Vagina (tissue), 2 donors: ENCODE measurements at regions of chr22 and their contacts with region 1.

Region 1: DNA sequence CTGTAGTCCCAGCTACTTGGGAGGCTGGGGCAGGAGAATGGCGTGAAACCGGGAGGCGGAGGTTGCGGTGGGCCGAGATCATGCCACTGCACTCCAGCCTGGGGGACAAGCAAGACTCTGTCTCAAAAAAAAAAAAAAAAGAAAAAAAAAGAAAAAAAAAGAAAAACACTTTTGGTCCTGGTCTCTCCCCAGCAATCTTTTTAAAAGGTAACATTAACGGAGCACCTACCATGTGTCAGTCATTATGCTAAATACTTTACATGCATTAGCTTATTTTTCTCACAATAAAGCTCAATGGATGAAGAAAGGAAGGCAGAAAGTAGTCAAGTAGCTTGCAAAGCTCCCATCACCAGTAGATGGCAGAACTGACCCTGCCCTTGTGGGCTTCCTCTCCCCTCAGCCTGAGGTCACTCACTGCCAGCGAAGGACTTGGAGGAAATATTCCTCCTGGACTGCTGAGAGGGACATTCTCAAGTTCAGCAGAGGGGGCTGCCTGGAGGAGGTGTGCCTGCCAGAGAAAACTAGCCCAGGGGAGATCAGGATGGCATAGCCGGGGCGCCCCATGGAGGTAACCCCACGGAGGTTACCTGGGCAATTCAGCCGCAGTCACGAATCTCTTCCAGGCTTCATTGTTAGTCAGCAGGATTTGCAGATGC is 15.5 kb downstream of the APOL3 start:
- DNase-seq: no peak
- H3K4me3 ChIP-seq: no peak overlapping the region
- H3K27ac ChIP-seq: no peak overlapping the region
- H3K4me1 ChIP-seq: peaks cover 30% of the 10 kb centered on the region
- H3K27me3 ChIP-seq: no peaks in the 10 kb centered on the region
- CTCF ChIP-seq: peak; percentile 57 to 72 (median 69)
- POLR2A ChIP-seq: no peak

Region 2: GRCh38 chr22:35900483-35901168 is 244.4 kb before region 1 on chr22:
- intact Hi-C with region 1: no loop called
- DNase-seq: no peak
- H3K4me3 ChIP-seq: no peak overlapping the region
- H3K27ac ChIP-seq: no peak overlapping the region
- H3K4me1 ChIP-seq: peaks cover 65% of the 10 kb centered on the region
- H3K27me3 ChIP-seq: no peaks in the 10 kb centered on the region
- CTCF ChIP-seq: no peak
- POLR2A ChIP-seq: no peak

Region 3: DNA sequence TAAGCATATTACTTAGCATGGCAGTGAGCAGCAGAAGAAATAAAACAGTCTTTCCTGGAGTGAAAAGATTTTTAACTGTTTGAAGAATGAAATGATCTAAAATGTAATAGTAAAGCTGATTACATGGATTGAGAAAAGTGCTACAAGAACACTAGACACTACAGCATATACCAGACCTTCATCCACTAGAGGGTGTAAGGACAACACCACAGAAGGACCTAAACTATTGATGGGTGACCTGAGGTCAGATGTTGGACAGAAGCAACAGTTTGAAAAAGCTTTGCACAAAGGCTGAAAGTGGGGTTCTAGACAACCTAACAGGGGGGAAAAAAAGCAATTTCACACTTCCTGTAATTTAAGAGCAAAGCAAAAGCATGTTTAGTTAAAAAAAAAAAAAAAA is 214.1 kb before region 1 on chr22:
- intact Hi-C with region 1: no loop called
- DNase-seq: no peak
- H3K4me3 ChIP-seq: no peak overlapping the region
- H3K27ac ChIP-seq: no peak overlapping the region
- H3K4me1 ChIP-seq: peaks cover 9% of the 10 kb centered on the region
- H3K27me3 ChIP-seq: no peaks in the 10 kb centered on the region
- CTCF ChIP-seq: peak; percentile 30 to 74 (median 33)
- POLR2A ChIP-seq: no peak

Region 4: GRCh38 chr22:36097880-36098279 is 47.1 kb before region 1 on chr22:
- intact Hi-C with region 1: no loop called
- DNase-seq: no peak
- H3K4me3 ChIP-seq: no peak overlapping the region
- H3K27ac ChIP-seq: no peak overlapping the region
- H3K4me1 ChIP-seq: no peaks in the 10 kb centered on the region
- H3K27me3 ChIP-seq: no peaks in the 10 kb centered on the region
- CTCF ChIP-seq: no peak
- POLR2A ChIP-seq: no peak

Region 5: DNA sequence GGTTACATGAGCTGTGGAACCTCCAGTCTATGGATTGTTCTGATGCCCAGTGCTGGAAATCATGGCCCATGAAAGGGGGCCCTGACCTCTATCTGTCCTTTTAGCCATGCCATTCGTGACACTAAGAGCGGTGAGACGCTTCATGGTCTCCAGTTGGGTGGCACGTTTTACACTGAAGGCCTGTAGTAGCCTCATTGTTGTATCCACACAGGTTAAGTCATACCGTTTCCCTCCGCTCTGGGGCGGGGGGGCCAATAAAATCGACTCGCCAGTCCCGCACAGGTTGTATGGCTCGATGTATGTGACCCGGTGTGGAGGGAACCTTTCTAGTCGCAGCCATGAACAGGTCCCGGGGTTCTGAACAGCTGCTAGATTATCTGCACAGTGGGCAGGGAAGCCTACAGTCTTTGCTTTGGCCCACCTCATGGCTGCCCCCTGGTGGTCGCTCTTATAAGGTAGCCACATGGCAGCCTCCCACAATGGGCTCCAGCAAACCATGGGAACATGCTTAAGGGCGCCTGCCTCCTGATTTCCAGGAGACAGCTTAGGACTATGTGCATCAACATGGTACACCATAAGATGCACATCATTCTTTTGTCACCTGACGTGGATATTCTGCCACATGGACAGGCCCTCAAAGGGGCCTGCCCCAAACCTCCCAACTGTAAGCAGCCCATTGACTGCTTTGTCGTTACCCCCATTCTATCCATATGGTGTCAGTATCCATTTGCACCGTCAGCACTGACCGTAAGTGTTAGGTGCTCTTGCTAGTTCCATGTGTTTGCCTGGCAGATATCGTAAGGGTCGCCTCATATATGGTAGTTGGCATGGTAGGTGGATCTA is 35.2 kb after region 1 on chr22:
- intact Hi-C with region 1: loop called (anchors 5 kb)
- DNase-seq: no peak
- H3K4me3 ChIP-seq: no peak overlapping the region
- H3K27ac ChIP-seq: no peak overlapping the region
- H3K4me1 ChIP-seq: no peaks in the 10 kb centered on the region
- H3K27me3 ChIP-seq: no peaks in the 10 kb centered on the region
- CTCF ChIP-seq: peak; percentile 66 to 94 (median 75)
- POLR2A ChIP-seq: no peak

Region 6: DNA sequence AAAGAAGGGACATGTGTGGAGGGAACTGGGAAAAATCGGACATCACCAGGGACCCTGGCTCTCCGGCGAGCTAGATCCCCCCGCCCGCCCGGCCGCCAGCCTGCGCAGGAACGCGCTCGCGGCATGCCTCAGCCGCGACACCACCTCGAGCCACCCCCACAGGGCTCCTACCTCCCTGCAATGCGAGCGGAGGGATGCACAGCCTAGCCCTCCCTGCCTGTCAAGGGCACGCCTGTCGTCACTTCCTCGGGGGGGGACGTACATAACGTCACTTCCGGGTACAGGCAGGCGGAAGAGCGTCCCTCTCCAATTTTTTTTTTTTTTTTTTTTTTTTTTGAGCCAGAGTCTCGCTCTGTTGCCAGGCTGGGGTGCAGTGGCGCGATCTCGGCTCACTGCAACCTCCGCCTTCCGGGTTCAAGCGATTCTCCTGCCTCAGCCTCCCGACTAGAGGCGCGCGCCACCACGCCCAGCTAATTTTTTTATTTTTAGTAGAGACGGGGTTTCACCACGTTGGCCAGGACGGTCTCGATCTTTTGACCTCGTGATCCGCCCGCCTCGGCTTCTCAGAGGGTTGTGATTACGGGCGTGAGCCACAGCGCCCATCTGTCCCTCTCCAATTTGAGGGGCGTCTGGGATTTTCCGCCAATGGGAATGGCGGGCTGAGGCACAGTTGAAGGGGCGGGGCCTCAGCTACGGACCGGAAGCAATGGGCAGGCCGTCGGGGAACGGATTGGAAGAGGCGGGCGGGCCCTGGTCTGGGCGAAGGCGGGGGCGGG is 336.6 kb after region 1 on chr22 and contains the start of gene TXN2:
- intact Hi-C with region 1: loop called (anchors 10 kb)
- DNase-seq: peak in 1 of 2 donors; percentile 97
- H3K4me3 ChIP-seq: peak within 1 kb of the TSS; percentile 56 to 77
- H3K27ac ChIP-seq: peak within 1 kb of the TSS; percentile 98
- H3K4me1 ChIP-seq: peaks cover 19% of the 10 kb centered on the region
- H3K27me3 ChIP-seq: no peaks in the 10 kb centered on the region
- CTCF ChIP-seq: no peak
- POLR2A ChIP-seq: peak in 1 of 2 donors; percentile 66
- total RNA-seq, gene TXN2: 46.9 TPM

Region 7: DNA sequence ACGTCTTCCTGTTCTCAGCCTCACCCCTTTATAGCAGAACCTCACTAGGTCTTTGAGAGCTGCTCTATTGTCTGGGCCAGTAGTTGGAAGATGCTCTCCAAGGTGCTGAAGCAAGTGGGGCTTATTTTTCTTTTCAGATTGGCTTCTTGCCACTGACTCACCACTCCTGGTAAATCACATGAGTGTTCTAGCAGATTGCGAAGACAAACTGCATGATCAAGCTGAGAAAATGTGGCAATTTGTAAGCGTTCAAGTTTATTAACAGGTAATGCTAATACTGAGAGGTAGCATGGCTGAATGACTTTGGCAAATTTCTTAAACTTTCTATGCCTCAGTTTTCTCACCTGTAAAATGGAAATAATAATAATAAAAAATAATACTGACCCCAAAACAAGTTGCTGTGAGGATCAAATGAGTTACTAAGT is 499.3 kb after region 1 on chr22:
- intact Hi-C with region 1: no loop called
- DNase-seq: no peak
- H3K4me3 ChIP-seq: no peak overlapping the region
- H3K27ac ChIP-seq: no peak overlapping the region
- H3K4me1 ChIP-seq: no peaks in the 10 kb centered on the region
- H3K27me3 ChIP-seq: no peaks in the 10 kb centered on the region
- CTCF ChIP-seq: no peak
- POLR2A ChIP-seq: no peak